AG04449 (cell line): ENCODE measurements at regions of chr19 and their contacts with region 1.

Region 1: DNA sequence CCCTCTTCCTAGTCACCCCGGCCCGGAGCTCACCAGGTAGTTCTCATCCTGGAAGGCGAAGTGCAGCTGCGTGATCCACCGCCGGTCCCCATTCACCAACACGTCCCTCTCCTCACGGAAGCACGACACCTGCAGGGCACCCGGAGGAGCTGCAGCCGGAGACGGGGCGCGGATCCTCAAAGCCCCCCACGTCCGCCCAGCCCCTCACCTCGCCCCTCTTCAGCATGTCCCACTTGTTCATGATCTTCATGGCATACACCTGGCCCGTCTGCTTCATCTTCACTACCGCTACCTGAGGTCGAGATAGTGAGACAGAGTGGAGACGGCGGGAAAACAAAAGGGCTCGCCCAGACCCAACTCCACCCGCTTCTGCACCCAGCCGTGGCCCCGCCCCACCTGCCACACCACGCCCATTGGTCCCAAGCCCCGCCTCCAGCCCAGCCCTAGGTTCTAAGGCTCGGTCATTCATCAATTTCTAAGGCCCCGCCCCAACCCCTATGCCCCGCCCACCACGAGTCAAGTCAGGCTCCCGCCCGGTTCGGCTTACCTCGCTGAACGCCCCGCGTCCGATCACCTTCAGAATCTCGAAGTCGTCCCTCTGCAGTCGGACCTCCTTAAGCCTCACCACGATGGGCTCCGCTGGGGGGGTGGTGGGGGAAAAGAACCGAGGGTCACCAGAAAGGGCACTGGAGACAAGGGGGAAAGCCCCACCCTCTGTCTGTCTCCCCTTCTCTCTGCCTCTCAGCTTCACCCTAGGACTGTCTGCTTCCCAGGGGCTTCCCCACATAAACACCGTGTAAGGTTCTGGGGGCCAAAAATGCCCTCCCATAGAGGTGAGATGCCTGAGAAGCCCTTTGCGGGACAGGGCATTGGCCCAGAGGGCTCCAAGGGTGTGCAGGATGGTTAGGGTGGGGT is 2.8 kb downstream of the DMPK start:
- DNase-seq: no peak
- H3K4me3 ChIP-seq: peak overlapping the region; percentile 23
- CTCF ChIP-seq: peak; percentile 40

Region 2: GRCh38 chr19:45632468-45633196 is 146.9 kb before region 1 on chr19:
- CTCF ChIA-PET with region 1: no interaction called
- POLR2A ChIA-PET with region 1: no interaction called
- DNase-seq: peak; percentile 59
- H3K4me3 ChIP-seq: no peak overlapping the region
- CTCF ChIP-seq: no peak

Region 3: GRCh38 chr19:45792470-45793177 is 13.1 kb after region 1 on chr19 and contains the start of gene DMWD:
- CTCF ChIA-PET with region 1: interaction called, 170 read pairs
- POLR2A ChIA-PET with region 1: interaction called, 12 read pairs
- DNase-seq: peak; percentile 88
- H3K4me3 ChIP-seq: peak within 1 kb of the TSS; percentile 89
- CTCF ChIP-seq: no peak